Activated T-helper 2 cell treated with anti-CD3 and anti-CD28 coated beads, Interferon-gamma antibody, Interleukin-2, Interleukin-4, amounts not matched to agents 10 μg/mL and 5 μg/mL and 100 μg/mL, durations not matched to agents 14 hours and 24 hours and 36 hours (primary cell): ENCODE measurements at regions of chr13 and their contacts with region 1.

Region 1: DNA sequence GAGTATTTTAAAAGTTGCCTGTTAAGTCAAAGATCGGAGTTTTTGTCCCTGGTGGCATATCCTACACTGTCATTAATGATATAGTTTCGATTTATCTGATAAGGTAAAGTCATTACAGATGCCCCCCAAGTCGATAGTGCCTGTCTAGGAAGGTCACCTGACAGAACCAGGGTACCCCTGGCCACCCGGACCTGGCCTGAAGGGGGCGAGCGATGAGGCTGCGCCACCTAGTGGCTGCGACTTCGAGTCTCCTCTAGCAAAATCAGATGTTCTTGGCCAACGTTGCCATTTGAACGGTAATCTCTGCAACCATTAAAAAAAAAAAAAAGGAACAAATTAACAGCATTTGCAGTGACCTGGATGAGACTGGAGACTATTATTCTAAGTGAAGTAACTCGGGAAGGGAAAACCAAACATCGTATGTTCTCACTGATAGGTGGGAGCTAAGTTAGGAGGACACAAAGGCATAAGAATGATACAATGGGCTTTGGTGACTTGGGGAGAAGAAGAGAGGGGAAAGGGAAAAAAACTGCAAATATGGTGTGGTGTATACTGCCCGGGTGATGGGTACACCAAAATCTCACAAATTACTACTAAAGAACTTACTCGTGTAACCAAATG is 565.1 kb downstream of the LIG4 start:
- DNase-seq: peak; percentile 10
- H3K4me3 Mint-ChIP-seq: no peak overlapping the region
- H3K27ac Mint-ChIP-seq: no peak overlapping the region
- H3K4me1 Mint-ChIP-seq: no peaks in the 10 kb centered on the region
- H3K27me3 Mint-ChIP-seq: no peaks in the 10 kb centered on the region

Region 2: GRCh38 chr13:107211073-107211472 is 439.1 kb before region 1 on chr13:
- intact Hi-C with region 1: loop called (anchors 2 kb)
- DNase-seq: peak; percentile 20
- H3K4me3 Mint-ChIP-seq: no peak overlapping the region
- H3K27ac Mint-ChIP-seq: no peak overlapping the region
- H3K4me1 Mint-ChIP-seq: no peaks in the 10 kb centered on the region
- H3K27me3 Mint-ChIP-seq: no peaks in the 10 kb centered on the region